ENCODE measurements at regions of chrX and their contacts with region 1.

Region 1: GRCh38 chrX:109709129-109709631 is 23.9 kb downstream of the ACSL4 start:
- DNase-seq: no peak
- ATAC-seq: peak; percentile 69
- H3K4me3 Mint-ChIP-seq: peak overlapping the region; percentile 60
- H3K27ac Mint-ChIP-seq: peak overlapping the region; percentile 67
- H3K4me1 Mint-ChIP-seq: peaks cover 55% of the 10 kb centered on the region
- H3K27me3 Mint-ChIP-seq: no peaks in the 10 kb centered on the region
- CTCF ChIP-seq: no peak

Region 2: DNA sequence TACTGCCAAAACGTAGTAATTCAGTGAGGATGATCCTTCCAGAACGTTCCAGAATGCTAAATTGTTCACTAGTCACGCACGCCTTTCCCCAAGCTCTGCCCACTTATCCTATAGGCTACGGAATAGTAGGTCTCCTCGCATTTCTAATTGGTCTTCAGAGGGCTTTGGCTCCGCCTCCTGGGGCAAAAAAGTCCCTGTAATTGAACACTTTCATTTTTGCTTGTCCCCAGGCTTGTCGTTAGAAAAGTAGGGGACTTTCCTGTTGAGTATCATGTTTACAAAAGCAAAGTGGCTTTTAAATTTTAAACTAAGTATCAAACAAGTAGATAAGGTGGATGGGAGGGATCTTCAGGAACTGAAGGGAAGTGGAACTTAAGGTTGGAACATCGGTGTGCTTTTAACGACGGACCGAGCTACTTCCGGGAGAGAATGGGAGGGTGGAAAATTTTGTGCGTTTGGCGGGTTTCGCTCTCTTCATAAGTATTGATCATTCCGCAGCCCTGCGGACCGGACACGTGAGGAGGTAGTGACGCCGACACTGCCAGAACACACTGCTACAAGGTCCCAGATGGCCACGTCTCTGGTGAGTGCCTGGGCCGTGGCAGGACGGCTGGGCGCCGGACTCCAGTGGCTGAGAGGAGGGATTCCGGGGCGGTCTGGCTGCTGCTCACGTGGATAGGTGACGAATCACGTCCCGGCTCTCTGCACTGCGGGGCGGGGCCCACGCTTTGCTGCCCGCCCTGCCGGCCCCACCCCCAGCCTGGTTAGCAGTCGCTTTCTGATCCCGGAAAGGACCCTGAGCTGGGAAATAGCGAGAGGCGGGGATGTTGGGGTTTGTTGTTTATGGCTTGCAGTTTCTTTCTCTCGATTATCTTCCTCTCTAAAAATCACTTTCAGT is 172.5 kb before region 1 on chrX and contains the start of gene NXT2:
- CTCF ChIA-PET with region 1: no interaction called
- POLR2A ChIA-PET with region 1: interaction called, 3 read pairs
- intact Hi-C with region 1: loop called (anchors 1 kb)
- DNase-seq: peak; percentile 69
- ATAC-seq: peak; percentile 98
- H3K4me3 Mint-ChIP-seq: peak within 1 kb of the TSS; percentile 94
- H3K27ac Mint-ChIP-seq: peak within 1 kb of the TSS; percentile 98
- H3K4me1 Mint-ChIP-seq: peaks cover 33% of the 10 kb centered on the region
- H3K27me3 Mint-ChIP-seq: no peaks in the 10 kb centered on the region
- CTCF ChIP-seq: no peak
- total RNA-seq, gene NXT2: 9.7 and 12.8 TPM in 2 replicates

Region 3: GRCh38 chrX:109732780-109733657 is 23.8 kb after region 1 on chrX and contains the start of gene ACSL4:
- CTCF ChIA-PET with region 1: interaction called, 8 read pairs
- POLR2A ChIA-PET with region 1: interaction called, 6 read pairs
- intact Hi-C with region 1: loop called (anchors 2 kb)
- DNase-seq: peak; percentile 82
- ATAC-seq: peak; percentile 92
- H3K4me3 Mint-ChIP-seq: peak within 1 kb of the TSS; percentile 99
- H3K27ac Mint-ChIP-seq: peak within 1 kb of the TSS; percentile 96
- H3K4me1 Mint-ChIP-seq: peaks cover 43% of the 10 kb centered on the region
- H3K27me3 Mint-ChIP-seq: no peaks in the 10 kb centered on the region
- CTCF ChIP-seq: no peak
- total RNA-seq, gene ACSL4: 36.7 and 55.2 TPM in 2 replicates

Region 4: GRCh38 chrX:109856974-109857373 is 147.8 kb after region 1 on chrX:
- CTCF ChIA-PET with region 1: interaction called, 112 read pairs
- POLR2A ChIA-PET with region 1: interaction called, 4 read pairs
- intact Hi-C with region 1: loop called (anchors 1 kb)
- DNase-seq: no peak
- ATAC-seq: no peak
- H3K4me3 Mint-ChIP-seq: no peak overlapping the region
- H3K27ac Mint-ChIP-seq: no peak overlapping the region
- H3K4me1 Mint-ChIP-seq: peaks cover 7% of the 10 kb centered on the region
- H3K27me3 Mint-ChIP-seq: no peaks in the 10 kb centered on the region
- CTCF ChIP-seq: no peak

Region 5: DNA sequence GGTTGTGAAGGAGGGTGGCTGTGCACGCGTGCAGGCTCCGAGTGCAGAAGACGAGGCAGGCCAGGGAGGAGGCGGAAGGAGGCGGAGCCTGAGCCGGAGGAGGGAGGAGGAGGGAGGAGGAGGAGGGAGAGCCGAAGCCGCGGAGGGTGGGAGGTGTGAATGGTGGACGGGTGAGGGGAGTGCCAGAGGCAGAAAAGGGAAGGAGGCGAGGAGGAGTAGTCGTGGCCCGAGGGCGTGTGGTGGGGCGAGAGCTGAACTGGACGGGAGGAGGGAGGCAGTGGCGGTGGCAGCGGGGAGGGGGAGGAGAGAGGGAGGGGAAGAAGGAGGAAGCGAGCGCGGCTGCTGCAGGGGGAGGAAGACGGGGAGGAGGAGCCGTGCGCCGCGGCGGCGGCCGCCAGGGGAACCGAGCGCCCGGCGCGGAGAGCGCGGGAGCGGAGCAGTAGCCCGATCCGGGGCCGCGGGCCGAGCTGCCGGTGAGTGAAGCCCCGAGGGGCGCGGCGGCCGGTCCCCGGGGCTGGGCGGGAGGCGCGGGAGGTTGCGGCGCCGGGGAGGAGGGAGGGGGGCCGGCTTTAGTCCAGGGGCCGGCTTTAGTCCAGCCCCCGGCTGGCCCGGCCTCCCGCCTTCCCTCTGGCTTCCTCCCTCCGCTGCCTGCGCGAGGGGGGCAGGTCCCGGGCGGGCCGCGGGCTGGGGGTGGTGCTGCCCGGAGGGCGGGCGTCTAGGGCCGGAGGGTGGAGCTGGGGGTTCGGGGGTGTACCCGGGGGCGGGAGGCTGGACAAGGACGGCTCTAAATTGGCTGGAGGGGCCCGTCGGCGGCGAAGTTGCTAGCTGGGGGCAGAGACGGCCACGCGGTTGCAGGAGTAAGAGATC is 293.4 kb after region 1 on chrX and contains the start of gene TMEM164:
- CTCF ChIA-PET with region 1: no interaction called
- POLR2A ChIA-PET with region 1: interaction called, 3 read pairs
- intact Hi-C with region 1: loop called (anchors 10 kb)
- DNase-seq: peak; percentile 71
- ATAC-seq: peak; percentile 74
- H3K4me3 Mint-ChIP-seq: peak within 1 kb of the TSS; percentile 87
- H3K27ac Mint-ChIP-seq: peak within 1 kb of the TSS; percentile 92
- H3K4me1 Mint-ChIP-seq: peaks cover 38% of the 10 kb centered on the region
- H3K27me3 Mint-ChIP-seq: no peaks in the 10 kb centered on the region
- CTCF ChIP-seq: no peak
- total RNA-seq, gene TMEM164: 20.4 and 21.8 TPM in 2 replicates

Region 6: GRCh38 chrX:110097920-110098319 is 388.7 kb after region 1 on chrX:
- CTCF ChIA-PET with region 1: no interaction called
- POLR2A ChIA-PET with region 1: no interaction called
- intact Hi-C with region 1: no loop called
- DNase-seq: no peak
- ATAC-seq: no peak
- H3K4me3 Mint-ChIP-seq: no peak overlapping the region
- H3K27ac Mint-ChIP-seq: no peak overlapping the region
- H3K4me1 Mint-ChIP-seq: peaks cover under 1% of the 10 kb centered on the region
- H3K27me3 Mint-ChIP-seq: no peaks in the 10 kb centered on the region
- CTCF ChIP-seq: no peak

Region 7: DNA sequence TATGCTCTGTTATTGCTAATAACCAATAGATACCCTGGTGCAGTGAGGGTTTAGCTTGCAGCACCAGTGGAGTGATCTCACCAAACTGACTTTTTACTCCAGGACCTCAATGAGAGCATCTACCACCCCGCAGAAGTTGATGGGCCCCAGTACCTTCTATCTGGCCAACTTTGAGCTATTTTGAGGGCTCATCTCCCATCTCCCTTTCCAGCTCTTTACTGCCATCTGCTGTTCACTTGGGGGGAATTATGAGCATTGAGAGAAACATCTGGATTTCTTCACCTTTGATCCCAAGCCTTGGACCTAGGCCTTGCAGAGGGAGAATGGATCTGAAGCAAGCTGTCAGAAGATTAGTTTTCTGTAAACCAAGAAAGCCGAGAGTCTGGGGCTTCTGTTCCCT is 437.3 kb after region 1 on chrX:
- CTCF ChIA-PET with region 1: interaction called, 18 read pairs
- POLR2A ChIA-PET with region 1: no interaction called
- intact Hi-C with region 1: loop called (anchors 1 kb)
- DNase-seq: no peak
- ATAC-seq: peak; percentile 47
- H3K4me3 Mint-ChIP-seq: no peak overlapping the region
- H3K27ac Mint-ChIP-seq: no peak overlapping the region
- H3K4me1 Mint-ChIP-seq: peaks cover 7% of the 10 kb centered on the region
- H3K27me3 Mint-ChIP-seq: no peaks in the 10 kb centered on the region
- CTCF ChIP-seq: no peak